ENCODE measurements at regions of chr12 and their contacts with region 1.

Region 1: DNA sequence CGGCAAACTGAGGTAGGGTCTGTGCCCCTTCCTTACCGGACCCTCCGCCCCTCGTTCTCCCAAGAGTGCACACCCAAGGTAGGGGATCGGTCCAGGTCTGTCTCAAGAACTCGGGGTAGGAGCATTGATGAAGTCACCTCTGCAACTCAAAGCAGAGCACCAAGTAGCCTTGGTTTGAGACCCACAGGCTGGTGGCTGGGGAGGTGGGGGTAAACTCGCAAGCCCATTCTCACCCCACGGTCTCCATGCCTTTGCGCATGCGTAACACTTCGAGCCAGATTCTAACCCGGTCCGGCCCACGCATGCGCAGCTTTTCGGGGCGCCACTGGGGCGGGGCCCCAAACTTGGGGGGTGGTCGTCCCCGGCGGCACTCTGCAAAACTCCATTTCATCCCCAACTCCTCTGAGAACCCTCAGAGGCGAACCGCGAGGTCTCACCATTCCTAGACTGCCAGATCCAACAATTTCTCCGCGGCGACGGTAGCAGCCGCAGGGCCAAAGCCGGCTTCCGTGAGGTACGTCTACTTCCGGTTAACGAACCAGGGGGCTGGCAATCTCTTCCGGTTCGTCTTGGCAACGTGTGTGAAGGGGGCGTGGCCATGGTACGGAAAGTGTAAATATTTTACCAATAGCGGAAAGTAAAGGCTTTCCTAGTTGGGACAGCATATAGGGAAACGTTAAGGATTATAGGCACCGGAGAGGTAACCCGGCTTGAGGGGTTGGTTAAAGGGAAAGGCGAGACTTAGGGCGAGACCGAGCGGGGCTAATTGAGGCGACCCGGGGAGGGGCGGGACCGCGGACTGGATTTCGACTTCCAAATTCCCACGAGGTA is at the start of gene MCRS1:
- DNase-seq: peak; percentile 93
- H3K4me3 Mint-ChIP-seq: peak within 1 kb of the TSS; percentile 91
- H3K27ac Mint-ChIP-seq: peak within 1 kb of the TSS; percentile 99
- H3K4me1 Mint-ChIP-seq: peaks cover 63% of the 10 kb centered on the region
- H3K27me3 Mint-ChIP-seq: no peaks in the 10 kb centered on the region
- total RNA-seq, gene MCRS1: 85.3 to 89.2 TPM

Region 2: DNA sequence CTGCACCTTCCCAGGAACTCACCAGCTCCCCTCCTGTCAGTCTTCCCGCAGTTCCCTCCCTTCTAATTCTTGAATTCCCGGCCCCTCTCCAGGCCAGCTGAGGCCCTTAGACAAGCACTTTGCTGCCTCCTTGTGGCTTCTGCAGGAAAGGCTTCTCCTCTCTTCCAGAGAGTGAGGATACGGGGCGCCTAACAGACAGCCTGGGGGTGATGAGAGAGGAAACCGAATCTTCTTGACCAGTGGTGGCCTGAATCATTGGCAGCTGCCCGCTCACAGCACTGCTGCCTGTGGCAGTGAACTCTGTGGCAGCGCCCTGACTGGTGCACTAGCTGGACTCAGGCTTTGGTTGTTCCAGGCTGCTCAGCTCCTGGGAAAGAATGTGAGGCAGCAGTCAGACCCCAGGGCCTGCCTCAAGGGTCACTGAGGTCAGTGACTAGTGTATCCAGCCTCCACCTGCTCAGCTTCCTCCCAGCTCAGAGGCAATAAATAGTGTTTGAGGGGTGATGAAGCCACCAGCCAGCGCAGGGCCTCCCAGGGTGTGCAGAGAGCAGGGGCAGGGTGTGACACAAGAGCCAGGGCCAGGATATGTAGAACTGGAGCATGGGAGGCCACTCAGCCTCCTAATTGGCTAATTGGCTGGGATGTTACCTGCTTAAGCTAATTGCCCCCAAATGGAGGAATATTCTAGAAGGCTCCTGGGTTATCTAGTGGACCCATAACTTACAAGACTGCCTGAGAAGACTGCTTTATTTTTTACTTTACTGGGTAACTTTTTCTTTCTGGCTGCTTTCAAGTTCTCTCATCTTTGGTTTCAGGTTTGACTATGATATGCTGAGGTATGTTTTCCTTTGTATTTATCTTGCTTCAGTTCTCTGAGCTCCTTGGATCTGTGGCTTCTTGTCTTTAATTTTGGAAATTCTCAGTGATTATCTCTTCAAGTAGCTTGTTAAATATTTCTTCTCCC is 13.0 kb after region 1 on chr12:
- CTCF ChIA-PET with region 1: interaction called, 22 read pairs
- POLR2A ChIA-PET with region 1: no interaction called
- DNase-seq: peak; percentile 75
- H3K4me3 Mint-ChIP-seq: no peak overlapping the region
- H3K27ac Mint-ChIP-seq: peak overlapping the region; percentile 22
- H3K4me1 Mint-ChIP-seq: peaks cover 22% of the 10 kb centered on the region
- H3K27me3 Mint-ChIP-seq: no peaks in the 10 kb centered on the region

Measured in activated CD4-positive, alpha-beta T cell treated with anti-CD3 and anti-CD28 coated beads, Interleukin-2, amount 10 ng/mL, durations not matched to agents 7 days and 5 days (primary cell).